Right ventricle myocardium inferior (tissue), 1 donor: ENCODE measurements at regions of chr6 and their contacts with region 1.

Region 1: GRCh38 chr6:159134701-159135364 is 34.4 kb upstream of the FNDC1 start:
- DNase-seq: no peak
- ATAC-seq: peak; percentile 68

Region 2: DNA sequence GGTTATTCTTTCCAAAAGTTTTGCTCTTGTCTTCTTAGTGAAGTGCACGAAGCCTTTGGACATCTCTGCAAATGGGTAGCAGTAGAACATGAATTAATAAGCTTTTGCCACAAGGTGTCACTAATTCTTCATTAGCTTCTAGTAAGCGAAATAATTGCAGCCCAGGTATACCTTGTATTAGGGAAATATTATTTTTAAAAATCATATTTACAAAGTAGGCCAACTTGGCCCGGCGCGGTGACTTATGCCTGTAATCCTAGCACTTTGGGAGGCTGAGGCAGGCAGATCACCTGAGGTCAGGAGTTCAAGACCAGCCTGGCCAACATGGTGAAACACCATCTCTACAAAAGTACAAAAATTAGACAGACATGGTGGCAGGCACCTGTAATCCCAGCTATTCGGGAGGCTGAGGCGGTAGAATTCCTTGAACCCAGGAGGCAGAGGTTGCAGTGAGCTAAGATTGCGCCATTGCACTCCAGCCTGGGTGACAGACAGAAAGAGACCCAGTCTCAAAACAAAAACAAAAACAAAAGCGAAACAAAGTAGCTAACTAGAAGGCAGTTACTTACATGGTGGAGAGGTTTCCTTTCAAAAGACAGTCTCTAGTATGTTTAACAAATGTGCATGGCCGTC is 126.1 kb before region 1 on chr6:
- intact Hi-C with region 1: loop called (anchors 2 kb)
- DNase-seq: no peak
- ATAC-seq: no peak

Region 3: GRCh38 chr6:159056003-159056402 is 78.8 kb before region 1 on chr6:
- intact Hi-C with region 1: no loop called
- DNase-seq: no peak
- ATAC-seq: peak; percentile 23

Region 4: GRCh38 chr6:159279790-159280277 is 145.0 kb after region 1 on chr6:
- intact Hi-C with region 1: no loop called
- DNase-seq: no peak
- ATAC-seq: no peak

Region 5: GRCh38 chr6:159360306-159360705 is 225.5 kb after region 1 on chr6:
- intact Hi-C with region 1: no loop called
- DNase-seq: no peak
- ATAC-seq: peak; percentile 37